CD8-positive, alpha-beta T cell (primary cell): ENCODE measurements at regions of chr9 and their contacts with region 1.

Region 1: DNA sequence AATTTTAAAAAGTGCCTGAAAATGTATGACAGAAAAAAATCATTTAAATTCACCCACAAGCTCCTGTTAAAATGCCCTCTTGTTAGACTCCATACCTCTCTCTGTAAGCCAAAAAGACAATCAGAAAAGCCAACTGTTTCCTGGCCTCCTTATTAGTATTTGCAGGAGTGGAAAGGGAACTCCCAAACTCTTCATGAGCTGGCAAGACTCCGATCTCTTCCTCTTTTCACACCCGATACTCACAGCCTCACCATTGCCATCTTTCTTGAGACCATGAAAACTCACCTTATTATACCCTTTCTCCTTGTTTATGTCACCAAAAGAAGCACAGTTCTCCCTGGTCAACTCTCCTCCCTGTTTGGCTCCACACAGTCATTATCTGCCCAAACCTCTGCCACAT is 197.8 kb downstream of the DMAC1 start:
- DNase-seq: no peak
- ATAC-seq: no peak
- H3K4me3 ChIP-seq: no peak overlapping the region
- H3K4me3 Mint-ChIP-seq: no peak overlapping the region
- H3K27ac ChIP-seq: no peak overlapping the region
- H3K27ac Mint-ChIP-seq: no peak overlapping the region
- H3K4me1 ChIP-seq: no peaks in the 10 kb centered on the region
- H3K4me1 Mint-ChIP-seq: peaks cover 2% of the 10 kb centered on the region
- H3K27me3 ChIP-seq: no peaks in the 10 kb centered on the region
- H3K27me3 Mint-ChIP-seq: no peaks in the 10 kb centered on the region
- CTCF ChIP-seq: no peak

Region 2: GRCh38 chr9:7579351-7579750 is 22.4 kb before region 1 on chr9:
- CTCF ChIA-PET with region 1: no interaction called
- POLR2A ChIA-PET with region 1: no interaction called
- intact Hi-C with region 1: no loop called
- DNase-seq: no peak
- ATAC-seq: no peak
- H3K4me3 ChIP-seq: no peak overlapping the region
- H3K4me3 Mint-ChIP-seq: no peak overlapping the region
- H3K27ac ChIP-seq: no peak overlapping the region
- H3K27ac Mint-ChIP-seq: no peak overlapping the region
- H3K4me1 ChIP-seq: no peaks in the 10 kb centered on the region
- H3K4me1 Mint-ChIP-seq: no peaks in the 10 kb centered on the region
- H3K27me3 ChIP-seq: no peaks in the 10 kb centered on the region
- H3K27me3 Mint-ChIP-seq: no peaks in the 10 kb centered on the region
- CTCF ChIP-seq: no peak

Region 3: GRCh38 chr9:7613931-7614330 is 12.2 kb after region 1 on chr9:
- CTCF ChIA-PET with region 1: interaction called, 14 read pairs
- POLR2A ChIA-PET with region 1: interaction called, 3 read pairs
- intact Hi-C with region 1: no loop called
- DNase-seq: peak in 2 of 9 experiments; percentile 40 to 59
- ATAC-seq: peak; percentile 71
- H3K4me3 ChIP-seq: no peak overlapping the region
- H3K4me3 Mint-ChIP-seq: peak overlapping the region; percentile 69
- H3K27ac ChIP-seq: no peak overlapping the region
- H3K27ac Mint-ChIP-seq: peak overlapping the region; percentile 80
- H3K4me1 ChIP-seq: peaks cover 27% of the 10 kb centered on the region
- H3K4me1 Mint-ChIP-seq: peaks cover 33% of the 10 kb centered on the region
- H3K27me3 ChIP-seq: no peaks in the 10 kb centered on the region
- H3K27me3 Mint-ChIP-seq: no peaks in the 10 kb centered on the region
- CTCF ChIP-seq: no peak